H1 (cell line): ENCODE measurements at regions of chr4 and their contacts with region 1.

Region 1: DNA sequence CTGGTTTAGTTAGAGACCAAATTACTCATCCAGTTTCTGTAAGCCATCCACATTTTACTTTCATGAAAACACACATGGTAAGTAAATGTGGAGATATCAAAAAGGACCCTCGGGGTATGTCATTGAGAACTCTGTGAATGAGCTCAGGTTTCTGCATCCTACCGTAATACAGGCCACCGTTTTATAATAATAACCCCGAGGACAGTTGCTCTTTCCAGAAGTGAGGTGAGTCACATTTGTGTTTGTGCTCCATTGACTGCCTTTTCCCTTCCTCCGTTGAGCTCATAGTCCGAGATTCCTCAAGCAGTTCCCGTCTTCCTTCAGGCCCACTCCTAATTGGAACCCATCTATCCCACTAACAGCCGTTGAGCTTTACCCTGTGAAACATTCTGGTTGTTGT is 95.3 kb downstream of the GRID2 start:
- DNase-seq: no peak
- H3K4me3 ChIP-seq: no peak overlapping the region
- H3K27ac ChIP-seq: no peak overlapping the region
- H3K4me1 ChIP-seq: peaks cover 0 to 13% (median 4%) of the 10 kb centered on the region in 4 experiments; a peak in 4 of 7 replicates
- H3K27me3 ChIP-seq: no peaks in the 10 kb centered on the region
- CTCF ChIP-seq: no peak
- EP300 ChIP-seq: no peak
- POLR2A ChIP-seq: no peak
- RAD21 ChIP-seq: no peak

Region 2: DNA sequence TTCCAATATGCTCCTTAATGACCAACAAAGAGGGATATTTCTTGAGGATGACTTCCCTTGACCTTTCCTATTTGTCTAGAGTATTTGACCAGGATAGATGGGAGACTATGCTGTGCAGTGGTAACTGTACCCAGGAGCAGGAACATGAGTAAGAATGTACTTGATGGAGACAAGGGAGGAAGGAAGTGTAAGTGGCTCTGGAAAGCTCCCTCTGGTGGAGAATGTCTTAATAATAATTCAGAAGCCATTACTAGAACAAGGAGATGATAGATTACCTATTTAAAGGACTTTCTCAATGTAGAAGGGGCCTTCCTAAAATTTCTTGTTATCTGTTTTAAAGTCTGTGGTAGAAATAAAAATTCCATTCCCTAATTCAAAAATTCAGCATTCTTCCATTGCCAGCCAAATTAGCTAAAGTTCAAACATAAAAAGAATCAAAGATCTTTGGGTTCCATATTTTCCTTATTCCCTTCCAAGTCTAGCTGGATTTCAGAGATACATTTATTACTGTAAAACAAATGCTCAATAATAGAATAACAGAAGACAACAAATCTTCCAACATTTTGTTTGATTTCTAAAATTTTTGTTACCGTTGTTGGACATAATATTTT is 11.5 kb before region 1 on chr4:
- CTCF ChIA-PET with region 1: interaction called, 17 read pairs
- POLR2A ChIA-PET with region 1: no interaction called
- DNase-seq: peak in 1 of 2 experiments; percentile 13
- H3K4me3 ChIP-seq: no peak overlapping the region
- H3K27ac ChIP-seq: no peak overlapping the region
- H3K4me1 ChIP-seq: peaks cover 0 to 4% (median 0%) of the 10 kb centered on the region in 4 experiments; a peak in 2 of 7 replicates
- H3K27me3 ChIP-seq: peaks cover 0 to 1% (median 0%) of the 10 kb centered on the region in 4 experiments; a peak in 1 of 7 replicates
- CTCF ChIP-seq: peak in 2 of 3 experiments; percentile 53 to 66; a peak in 2 of 4 replicates
- EP300 ChIP-seq: no peak
- POLR2A ChIP-seq: no peak
- RAD21 ChIP-seq: peak; percentile 59 to 68